Endothelial cell of umbilical vein (primary cell): ENCODE measurements at regions of chr7 and their contacts with region 1.

Region 1: DNA sequence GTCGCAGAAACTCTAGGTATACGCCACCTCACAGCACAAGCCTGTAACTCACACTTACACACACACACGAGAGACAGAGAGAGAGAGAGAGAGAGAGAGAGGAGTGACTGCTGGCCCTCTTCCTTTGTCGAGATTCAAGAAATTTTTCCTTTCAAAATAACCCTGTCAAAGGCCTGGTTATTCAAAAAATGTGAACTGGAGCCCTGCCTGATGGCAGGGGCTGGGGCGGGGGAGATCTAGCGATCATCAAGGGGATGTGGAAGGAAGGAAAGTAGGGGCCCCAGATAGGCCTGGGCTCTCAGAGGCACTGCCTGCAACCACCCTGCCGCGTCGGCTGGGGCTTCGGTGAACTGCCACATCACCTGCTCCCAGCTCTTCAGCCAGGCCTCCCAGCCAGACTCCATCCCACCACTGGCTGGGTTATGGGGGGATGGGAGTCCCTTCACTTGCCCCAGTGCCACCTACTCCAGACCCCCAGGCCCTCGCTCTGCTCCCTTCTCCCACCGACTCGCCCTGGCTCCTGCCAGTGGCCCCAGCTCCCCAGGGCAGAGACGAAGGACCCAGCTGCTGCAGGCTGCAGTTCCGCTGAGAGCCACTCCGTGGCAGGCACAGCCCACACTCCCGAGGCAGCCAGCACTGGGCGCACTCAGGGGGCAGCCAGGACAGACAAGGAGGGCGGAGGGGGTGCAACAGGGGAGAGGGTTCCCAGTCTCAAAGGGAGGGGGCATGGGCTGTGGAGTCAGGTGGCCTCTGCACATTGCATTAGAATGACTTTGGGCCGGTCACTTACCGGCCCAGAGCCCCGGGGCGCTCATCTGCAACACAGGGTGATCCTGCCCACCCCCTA is 15.3 kb downstream of the KCNH2 start:
- DNase-seq: peak; percentile 36
- H3K4me3 ChIP-seq: no peak overlapping the region
- H3K27ac ChIP-seq: no peak overlapping the region
- H3K4me1 ChIP-seq: no peaks in the 10 kb centered on the region
- H3K27me3 ChIP-seq: peaks cover 17 to 23% of the 10 kb centered on the region in 2 experiments
- CTCF ChIP-seq: peak; percentile 81 to 96
- POLR2A ChIP-seq: no peak

Region 2: DNA sequence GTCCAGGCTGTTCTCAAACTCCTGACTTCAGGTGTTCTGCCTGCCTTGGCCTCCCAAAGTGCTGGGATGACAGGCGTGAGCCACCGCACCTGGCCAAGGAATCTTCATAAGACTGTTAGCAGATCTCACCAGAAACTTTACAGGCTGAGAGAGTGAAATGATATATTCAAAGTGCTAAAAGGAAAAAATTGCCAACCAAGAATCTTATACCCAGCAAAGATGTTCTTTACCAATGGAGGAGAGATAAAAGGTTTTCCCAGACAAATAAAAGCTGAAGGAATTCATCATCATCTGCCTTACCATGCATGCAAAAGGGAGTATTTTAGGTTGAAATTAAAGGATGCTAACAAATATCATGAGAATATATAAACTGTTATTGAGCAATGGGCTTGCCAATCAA is 424.5 kb before region 1 on chr7:
- CTCF ChIA-PET with region 1: no interaction called
- POLR2A ChIA-PET with region 1: no interaction called
- dilution Hi-C with region 1: no loop called
- intact Hi-C with region 1: no loop called
- DNase-seq: no peak
- H3K4me3 ChIP-seq: no peak overlapping the region
- H3K27ac ChIP-seq: no peak overlapping the region
- H3K4me1 ChIP-seq: no peaks in the 10 kb centered on the region
- H3K27me3 ChIP-seq: no peaks in the 10 kb centered on the region
- CTCF ChIP-seq: no peak
- POLR2A ChIP-seq: no peak

Region 3: GRCh38 chr7:150898475-150899011 is 64.2 kb before region 1 on chr7:
- CTCF ChIA-PET with region 1: interaction called, 18 read pairs
- POLR2A ChIA-PET with region 1: no interaction called
- dilution Hi-C with region 1: no loop called
- intact Hi-C with region 1: loop called (anchors 2 kb)
- DNase-seq: peak; percentile 57
- H3K4me3 ChIP-seq: no peak overlapping the region
- H3K27ac ChIP-seq: no peak overlapping the region
- H3K4me1 ChIP-seq: no peaks in the 10 kb centered on the region
- H3K27me3 ChIP-seq: peaks cover 5 to 6% of the 10 kb centered on the region in 2 experiments
- CTCF ChIP-seq: peak; percentile 94 to 97
- POLR2A ChIP-seq: no peak

Region 4: GRCh38 chr7:151017953-151018420 is 55.2 kb after region 1 on chr7:
- CTCF ChIA-PET with region 1: interaction called, 97 read pairs
- POLR2A ChIA-PET with region 1: no interaction called
- dilution Hi-C with region 1: no loop called
- intact Hi-C with region 1: loop called (anchors 1 kb)
- DNase-seq: peak; percentile 58
- H3K4me3 ChIP-seq: no peak overlapping the region
- H3K27ac ChIP-seq: no peak overlapping the region
- H3K4me1 ChIP-seq: peaks cover 7% of the 10 kb centered on the region
- H3K27me3 ChIP-seq: peaks cover 12 to 14% of the 10 kb centered on the region in 2 experiments
- CTCF ChIP-seq: peak; percentile 98 to 99
- POLR2A ChIP-seq: no peak

Region 5: DNA sequence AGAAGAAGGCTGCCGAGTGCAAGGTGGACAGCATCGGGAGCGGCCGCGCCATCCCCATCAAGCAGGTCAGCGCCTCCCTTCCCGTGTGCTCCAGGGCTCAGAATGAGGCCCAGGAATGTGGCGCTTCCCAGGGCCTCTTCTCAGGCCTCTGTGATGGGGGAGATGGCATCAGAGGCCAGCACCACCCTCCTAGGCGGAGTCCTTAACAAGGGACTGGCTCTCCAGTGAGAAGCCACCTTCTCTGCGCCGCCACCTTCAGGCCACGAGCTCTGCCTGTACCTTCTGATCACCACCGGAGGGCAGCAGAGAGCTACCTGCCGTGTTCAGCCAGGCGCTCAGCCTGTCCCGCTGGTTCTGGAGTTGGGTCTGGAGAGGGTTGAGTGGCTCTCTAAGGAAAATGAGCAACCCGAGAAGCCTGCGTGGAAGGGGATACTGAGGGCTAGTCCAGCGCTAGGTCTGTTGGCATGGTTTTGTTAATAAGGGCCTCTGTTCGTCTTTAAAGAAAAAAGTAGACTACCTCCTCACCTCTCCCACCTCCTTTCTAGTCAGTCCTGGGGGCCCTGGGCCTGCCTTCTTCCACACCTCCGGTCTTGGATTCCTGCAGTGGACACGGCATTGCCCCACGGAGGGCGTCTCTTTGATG is 161.2 kb after region 1 on chr7:
- CTCF ChIA-PET with region 1: interaction called, 10 read pairs
- POLR2A ChIA-PET with region 1: no interaction called
- dilution Hi-C with region 1: no loop called
- intact Hi-C with region 1: no loop called
- DNase-seq: peak; percentile 74
- H3K4me3 ChIP-seq: no peak overlapping the region
- H3K27ac ChIP-seq: no peak overlapping the region
- H3K4me1 ChIP-seq: peaks cover 6% of the 10 kb centered on the region
- H3K27me3 ChIP-seq: no peaks in the 10 kb centered on the region
- CTCF ChIP-seq: peak; percentile 98 to 99
- POLR2A ChIP-seq: no peak